Right ventricle myocardium superior (tissue), 1 donor: ENCODE measurements at regions of chr11 and their contacts with region 1.

Region 1: GRCh38 chr11:75547580-75548058 is 14.4 kb upstream of the SERPINH1 start:
- DNase-seq: peak; percentile 75
- ATAC-seq: peak; percentile 88

Region 2: DNA sequence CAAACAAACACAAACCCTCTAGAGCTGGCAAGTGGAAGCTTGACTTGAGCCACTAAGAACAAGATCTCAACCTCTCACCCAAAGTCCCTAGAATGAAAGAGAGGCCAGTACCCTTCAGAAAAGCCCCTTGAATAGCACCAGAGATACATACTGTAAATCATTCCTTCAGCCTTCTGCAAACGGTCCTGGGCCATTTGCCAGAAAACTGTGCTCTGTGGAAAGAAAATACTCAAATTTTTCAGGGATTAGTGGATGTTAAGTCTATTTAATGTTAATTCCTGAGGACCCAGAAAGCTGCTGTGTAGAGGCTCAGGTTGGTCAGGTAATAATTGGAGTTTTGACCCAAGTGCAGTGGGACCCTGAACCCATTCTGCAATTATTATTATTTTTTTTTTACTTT is 31.4 kb after region 1 on chr11:
- intact Hi-C with region 1: loop called (anchors 2 kb)
- DNase-seq: no peak
- ATAC-seq: no peak

Region 3: DNA sequence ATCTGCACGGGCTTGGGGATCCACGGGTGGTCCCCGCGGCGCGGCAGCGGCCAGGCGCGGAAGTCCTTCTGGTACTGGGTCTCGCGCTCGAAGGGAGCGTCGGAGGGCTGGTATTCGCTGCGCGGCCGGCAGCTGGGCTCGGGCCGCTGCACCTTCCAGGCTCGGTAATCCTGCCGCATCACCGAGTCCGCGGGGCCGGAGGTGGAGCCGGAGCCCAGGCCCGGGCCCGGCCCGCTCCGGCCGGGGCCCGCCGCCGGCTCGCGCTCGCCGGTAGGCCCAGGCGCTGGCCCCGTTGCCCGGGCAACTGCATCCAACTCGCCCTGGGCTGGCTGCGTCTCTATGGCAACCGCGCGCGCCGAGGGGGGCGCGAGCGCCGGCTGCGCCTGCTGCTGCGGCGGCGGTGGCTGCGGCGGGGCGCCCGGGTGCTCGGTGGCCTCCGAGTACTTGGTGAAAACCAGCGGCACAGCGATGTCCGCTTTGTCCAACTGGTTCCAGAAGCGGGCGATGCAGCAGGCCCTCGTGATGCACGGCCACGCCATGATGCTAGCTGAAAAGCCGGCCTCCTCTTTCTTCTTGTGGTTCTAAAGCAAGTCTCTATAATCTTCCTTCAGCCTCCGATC is 120.3 kb after region 1 on chr11:
- intact Hi-C with region 1: loop called (anchors 10 kb)
- DNase-seq: peak; percentile 74
- ATAC-seq: peak; percentile 55

Region 4: DNA sequence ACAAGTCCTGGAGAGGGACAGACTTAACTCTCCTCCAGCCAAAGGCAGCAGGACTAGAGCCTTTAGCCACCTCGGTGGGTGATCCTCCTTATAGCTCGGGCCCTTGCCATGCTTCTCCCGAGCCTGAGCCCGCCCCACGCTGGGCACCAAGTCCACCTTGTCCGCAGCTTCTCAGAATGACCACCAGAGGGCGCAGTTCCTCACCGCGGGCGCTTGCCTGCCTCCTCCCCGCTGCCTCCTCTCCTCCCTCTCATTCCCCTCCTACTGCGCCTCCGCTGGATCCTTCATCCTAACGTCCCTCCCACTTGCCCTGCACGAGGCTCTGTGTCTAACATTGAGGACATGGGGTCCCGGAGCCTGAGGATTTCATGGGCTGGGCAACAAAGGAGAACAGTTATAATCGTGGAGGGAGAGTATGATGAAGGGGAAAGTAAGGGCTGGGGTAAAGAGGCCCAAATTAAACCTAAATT is 158.7 kb after region 1 on chr11:
- intact Hi-C with region 1: loop called (anchors 5 kb)
- DNase-seq: peak; percentile 80
- ATAC-seq: peak; percentile 98

Region 5: GRCh38 chr11:75733431-75734107 is 185.9 kb after region 1 on chr11:
- intact Hi-C with region 1: no loop called
- DNase-seq: no peak
- ATAC-seq: peak; percentile 84

Region 6: GRCh38 chr11:76033699-76034098 is 486.1 kb after region 1 on chr11:
- intact Hi-C with region 1: no loop called
- DNase-seq: no peak
- ATAC-seq: no peak